Common myeloid progenitor, CD34-positive (primary cell): ENCODE measurements at regions of chr16 and their contacts with region 1.

Region 1: DNA sequence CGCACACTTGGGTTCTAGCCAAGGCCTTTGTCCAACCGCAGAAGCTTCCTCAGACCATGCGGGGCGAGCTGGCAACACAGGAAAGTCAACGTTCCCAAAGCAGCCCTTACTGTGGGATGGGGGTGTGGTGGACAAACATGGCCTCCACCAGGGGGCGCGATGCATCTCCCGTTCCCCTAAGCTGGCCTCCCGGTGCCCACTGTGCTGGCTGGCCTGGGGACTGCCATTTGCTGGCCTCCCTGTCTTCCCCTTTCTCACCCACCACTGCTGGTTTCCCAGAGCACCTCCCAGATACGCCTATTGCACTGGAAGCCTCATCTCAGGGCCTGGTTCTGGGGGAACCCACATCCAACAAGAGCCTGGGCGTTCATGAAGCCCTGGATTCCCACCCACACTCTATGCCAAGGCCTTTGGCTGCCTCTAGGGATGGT is 145.3 kb downstream of the IRF8 start:
- DNase-seq: peak; percentile 54 to 71 (median 66)
- H3K4me3 ChIP-seq: no peak overlapping the region
- H3K27ac ChIP-seq: no peak overlapping the region
- H3K4me1 ChIP-seq: peaks cover 1 to 18% (median 7%) of the 10 kb centered on the region in 4 experiments
- H3K27me3 ChIP-seq: peaks cover 0 to 65% (median 6%) of the 10 kb centered on the region in 5 experiments

Region 2: DNA sequence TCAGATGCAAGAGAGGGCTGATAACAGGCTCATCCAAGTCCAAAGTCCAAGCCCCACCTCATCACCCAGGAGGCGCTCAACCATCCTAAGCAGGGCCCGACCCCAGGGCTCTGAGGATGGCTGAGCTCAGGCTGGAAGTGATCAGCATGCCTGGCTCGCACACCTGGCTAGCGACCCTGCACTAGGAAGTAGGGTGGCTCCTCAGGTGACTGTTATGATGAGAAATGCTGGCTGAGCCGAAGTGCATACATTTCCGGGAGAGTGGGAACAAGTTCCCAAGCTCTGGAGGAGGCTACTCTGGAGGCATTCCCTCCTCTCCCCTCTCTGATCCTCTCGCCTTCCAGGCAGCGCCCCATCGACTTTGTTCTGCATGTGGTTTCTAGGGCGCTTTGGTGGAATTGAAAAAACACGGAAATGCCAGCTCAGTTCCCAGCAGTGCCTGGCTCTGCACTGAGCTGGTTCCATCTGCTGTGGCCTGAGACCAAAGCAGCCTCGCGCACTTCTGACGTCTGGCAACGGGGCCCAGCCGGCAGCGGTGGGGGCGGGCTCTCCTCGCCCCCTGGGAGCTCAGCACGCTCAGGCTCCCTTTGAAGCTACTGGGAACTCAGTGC is 15.0 kb before region 1 on chr16:
- CTCF ChIA-PET with region 1: interaction called, 14 read pairs
- POLR2A ChIA-PET with region 1: no interaction called
- DNase-seq: peak; percentile 58 to 84 (median 77)
- H3K4me3 ChIP-seq: no peak overlapping the region
- H3K27ac ChIP-seq: no peak overlapping the region
- H3K4me1 ChIP-seq: peaks cover 0 to 11% (median 6%) of the 10 kb centered on the region in 4 experiments
- H3K27me3 ChIP-seq: peaks cover 0 to 56% (median 0%) of the 10 kb centered on the region in 5 experiments

Region 3: DNA sequence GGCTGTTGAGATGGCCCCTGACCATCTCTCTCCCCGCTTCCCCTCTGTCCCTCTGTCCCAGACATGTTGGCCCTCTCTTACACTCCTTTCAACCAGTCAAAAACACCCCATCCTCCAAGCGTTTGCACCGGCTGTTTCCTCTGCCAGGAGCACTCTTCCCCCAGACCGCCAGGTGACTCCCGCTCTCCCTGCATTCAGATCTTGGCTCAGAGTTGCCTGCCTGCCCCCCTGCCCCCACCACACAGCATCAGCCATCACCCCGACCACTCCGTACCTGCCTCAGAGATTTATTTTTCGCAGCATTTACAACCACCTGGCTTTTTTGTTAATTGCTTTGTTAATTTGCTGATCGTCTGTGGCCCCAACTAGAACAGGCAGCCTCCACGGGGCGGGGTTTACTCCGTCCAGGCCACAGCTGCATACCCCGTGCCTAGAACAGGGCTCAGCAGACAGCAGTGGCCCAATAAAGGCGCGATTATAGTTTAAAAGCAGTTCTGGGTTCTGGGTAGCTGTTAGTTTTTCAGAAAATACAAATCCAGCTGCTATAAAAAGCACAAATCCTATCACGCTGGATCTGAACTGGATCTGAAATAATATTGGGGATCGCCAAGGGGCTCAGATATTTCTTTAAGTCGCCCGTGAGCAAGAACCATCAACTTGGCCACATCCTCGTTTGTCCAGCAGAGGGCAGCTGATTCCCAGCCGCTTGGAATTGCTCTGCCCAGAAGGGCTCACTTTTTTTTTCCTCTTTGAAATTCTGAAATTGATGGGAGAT is 28.3 kb after region 1 on chr16:
- CTCF ChIA-PET with region 1: interaction called, 14 read pairs
- POLR2A ChIA-PET with region 1: no interaction called
- DNase-seq: peak; percentile 66 to 76 (median 68)
- H3K4me3 ChIP-seq: no peak overlapping the region
- H3K27ac ChIP-seq: no peak overlapping the region
- H3K4me1 ChIP-seq: peaks cover 0 to 8% (median 0%) of the 10 kb centered on the region in 4 experiments
- H3K27me3 ChIP-seq: peaks cover 0 to 64% (median 16%) of the 10 kb centered on the region in 5 experiments